Heart left ventricle (tissue), 16 donors: ENCODE measurements at regions of chr1 and their contacts with region 1.

Region 1: GRCh38 chr1:148290881-148291280 is 138.8 kb upstream of the NBPF11 start:
- DNase-seq: no peak
- ATAC-seq: no peak
- H3K4me3 ChIP-seq: no peak overlapping the region
- H3K27ac ChIP-seq: no peak overlapping the region
- H3K4me1 ChIP-seq: no peaks in the 10 kb centered on the region
- H3K27me3 ChIP-seq: peaks cover 0 to 7% (median 0%) of the 10 kb centered on the region in 9 donors
- CTCF ChIP-seq: no peak
- POLR2A ChIP-seq: no peak

Region 2: DNA sequence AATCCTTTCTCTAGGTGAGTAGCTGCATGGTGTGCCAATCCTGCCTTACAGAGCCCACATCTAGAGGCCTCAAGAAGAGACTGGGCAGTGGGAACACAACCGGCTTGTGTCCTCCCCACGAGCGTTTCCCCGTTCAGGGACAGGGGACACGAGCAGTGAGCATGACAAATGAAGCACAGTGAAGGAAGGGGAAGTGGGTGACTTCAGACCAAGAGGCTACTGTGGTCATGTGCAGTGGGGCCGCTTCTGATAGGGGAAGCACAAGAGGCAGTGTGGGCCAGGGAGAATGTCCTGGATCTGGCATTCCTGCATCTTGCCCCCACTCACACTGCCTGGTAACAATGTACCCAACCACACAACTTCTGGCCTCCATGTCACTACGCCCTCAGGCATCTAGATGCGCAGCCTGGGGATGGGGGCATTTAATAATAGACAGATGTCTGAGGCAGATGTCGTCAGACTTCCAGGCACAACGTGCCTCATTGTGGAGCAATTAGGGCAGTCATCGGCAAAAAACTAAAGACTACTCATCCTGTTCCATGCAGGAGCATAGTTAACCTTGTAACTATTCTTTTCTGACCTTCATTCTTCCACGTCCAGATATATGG is 16.8 kb after region 1 on chr1:
- intact Hi-C with region 1: no loop called
- DNase-seq: peak in 2 of 5 donors; percentile 16 to 64
- ATAC-seq: peak in 2 of 4 donors; percentile 29 to 50
- H3K4me3 ChIP-seq: no peak overlapping the region
- H3K27ac ChIP-seq: peak overlapping the region in 1 of 12 donors; percentile 16
- H3K4me1 ChIP-seq: peaks cover 0 to 18% (median 3%) of the 10 kb centered on the region in 12 donors
- H3K27me3 ChIP-seq: peaks cover 22 to 93% (median 67%) of the 10 kb centered on the region in 9 donors
- CTCF ChIP-seq: no peak
- POLR2A ChIP-seq: no peak

Region 3: DNA sequence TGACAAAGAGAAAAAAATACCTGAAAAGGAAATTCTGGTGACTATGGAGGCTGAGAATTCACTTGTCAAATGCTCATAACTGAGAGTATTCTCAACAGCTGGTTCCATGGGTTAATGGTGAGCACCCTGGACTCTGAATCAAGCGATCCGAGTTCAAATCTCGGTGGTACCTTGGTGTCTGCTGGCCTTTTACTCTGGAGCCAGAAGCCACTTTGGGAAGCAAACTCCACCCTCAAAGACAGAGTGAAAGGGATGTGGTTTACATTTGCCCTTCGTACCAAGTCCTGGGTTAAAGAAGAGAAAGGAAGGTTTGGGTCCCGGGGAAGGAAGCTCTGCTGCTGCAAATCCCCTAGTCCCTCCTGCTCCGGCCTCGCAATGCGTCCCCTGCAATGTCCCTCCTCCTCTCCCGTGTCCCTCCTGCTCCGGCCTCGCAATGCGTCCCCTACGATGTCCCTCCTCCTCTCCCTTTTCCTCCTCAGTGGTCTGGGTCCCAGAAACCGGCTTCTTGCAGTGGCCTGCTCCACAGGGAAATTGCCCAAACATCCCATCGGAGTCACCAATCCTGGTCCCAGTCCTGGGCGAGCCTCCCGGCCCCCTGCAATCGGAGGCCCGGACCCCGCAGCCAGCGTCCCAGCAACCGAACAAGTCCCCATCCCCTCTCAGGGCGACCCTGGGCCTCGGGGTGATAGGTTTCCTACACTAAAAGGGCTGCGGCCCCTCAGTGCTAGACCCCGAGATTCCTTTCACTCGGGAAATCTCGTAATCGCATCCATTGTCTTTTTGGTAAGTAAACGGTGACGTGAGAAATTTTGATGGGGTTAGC is 62.8 kb after region 1 on chr1:
- intact Hi-C with region 1: loop called in 1 of 10 experiments (anchors 10 kb)
- DNase-seq: no peak
- ATAC-seq: peak in 1 of 4 donors; percentile 44
- H3K4me3 ChIP-seq: peak overlapping the region in 6 of 12 donors; percentile 11 to 35 (median 28)
- H3K27ac ChIP-seq: no peak overlapping the region
- H3K4me1 ChIP-seq: peaks cover 0 to 15% (median 0%) of the 10 kb centered on the region in 12 donors
- H3K27me3 ChIP-seq: peaks cover 16 to 97% (median 47%) of the 10 kb centered on the region in 9 donors
- CTCF ChIP-seq: no peak
- POLR2A ChIP-seq: no peak